SK-N-SH (cell line): ENCODE measurements at regions of chr2 and their contacts with region 1.

Region 1: DNA sequence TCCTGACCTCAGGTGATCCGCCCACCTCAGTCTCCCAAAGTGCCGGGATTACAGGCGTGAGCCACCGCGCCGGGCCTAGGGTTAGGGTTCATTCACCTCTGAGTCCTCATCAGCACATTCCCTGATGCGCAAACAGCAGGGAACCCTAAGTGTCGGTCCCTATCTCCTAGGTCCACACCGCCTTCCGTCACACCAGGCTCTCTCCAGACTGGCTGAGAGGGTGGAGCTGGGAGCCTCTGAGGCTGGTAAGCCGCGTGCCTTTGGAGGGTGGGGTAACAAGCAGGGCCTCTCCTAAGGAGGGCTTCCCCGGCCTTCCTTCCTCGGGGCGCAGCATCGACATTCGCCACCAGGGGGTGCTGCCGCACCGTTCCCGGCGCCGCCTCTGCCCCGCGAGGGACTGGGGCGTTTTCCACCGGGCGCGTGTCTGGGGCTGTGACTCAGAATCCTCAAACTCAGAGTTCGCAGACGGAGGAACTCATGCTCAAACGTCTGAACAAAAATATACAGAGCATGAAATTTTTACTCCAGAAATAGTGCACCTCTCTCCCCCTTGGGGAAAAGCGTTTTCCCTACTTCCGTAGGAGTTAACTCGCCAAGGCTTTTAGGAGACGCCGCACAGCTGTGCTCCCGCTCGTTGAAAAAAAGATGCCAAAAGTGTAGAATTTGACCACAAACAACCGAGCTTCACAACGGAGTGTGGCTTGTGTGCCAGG is 63.9 kb upstream of the ASAP2 start:
- DNase-seq: peak; percentile 94
- H3K4me3 ChIP-seq: peak overlapping the region; percentile 23 to 36; a peak in 2 of 4 replicates
- H3K27ac ChIP-seq: peak overlapping the region; percentile 16 to 58; a peak in 3 of 4 replicates
- H3K4me1 ChIP-seq: peaks cover 3 to 8% of the 10 kb centered on the region in 2 experiments; a peak in 2 of 4 replicates
- H3K27me3 ChIP-seq: no peaks in the 10 kb centered on the region
- CTCF ChIP-seq: peak; percentile 99
- EP300 ChIP-seq: peak in 1 of 2 experiments; percentile 44; a peak in 1 of 4 replicates
- RAD21 ChIP-seq: peak; percentile 99

Region 2: GRCh38 chr2:8867363-8867762 is 275.3 kb before region 1 on chr2:
- CTCF ChIA-PET with region 1: interaction called, 99 read pairs
- POLR2A ChIA-PET with region 1: no interaction called
- DNase-seq: peak; percentile 33
- H3K4me3 ChIP-seq: no peak overlapping the region
- H3K27ac ChIP-seq: no peak overlapping the region
- H3K4me1 ChIP-seq: no peaks in the 10 kb centered on the region; a peak in 1 of 4 replicates
- H3K27me3 ChIP-seq: no peaks in the 10 kb centered on the region
- CTCF ChIP-seq: no peak
- EP300 ChIP-seq: peak in 1 of 2 experiments; percentile 28; a peak in 1 of 4 replicates
- RAD21 ChIP-seq: no peak

Region 3: GRCh38 chr2:8907764-8908288 is 234.9 kb before region 1 on chr2:
- CTCF ChIA-PET with region 1: interaction called, 10 read pairs
- POLR2A ChIA-PET with region 1: no interaction called
- DNase-seq: peak; percentile 39
- H3K4me3 ChIP-seq: no peak overlapping the region
- H3K27ac ChIP-seq: peak overlapping the region in 1 of 2 experiments; percentile 77; a peak in 2 of 4 replicates
- H3K4me1 ChIP-seq: peaks cover 0 to 3% of the 10 kb centered on the region in 2 experiments; a peak in 1 of 4 replicates
- H3K27me3 ChIP-seq: no peaks in the 10 kb centered on the region
- CTCF ChIP-seq: no peak
- EP300 ChIP-seq: peak in 1 of 2 experiments; percentile 64; a peak in 1 of 4 replicates
- RAD21 ChIP-seq: no peak

Region 4: DNA sequence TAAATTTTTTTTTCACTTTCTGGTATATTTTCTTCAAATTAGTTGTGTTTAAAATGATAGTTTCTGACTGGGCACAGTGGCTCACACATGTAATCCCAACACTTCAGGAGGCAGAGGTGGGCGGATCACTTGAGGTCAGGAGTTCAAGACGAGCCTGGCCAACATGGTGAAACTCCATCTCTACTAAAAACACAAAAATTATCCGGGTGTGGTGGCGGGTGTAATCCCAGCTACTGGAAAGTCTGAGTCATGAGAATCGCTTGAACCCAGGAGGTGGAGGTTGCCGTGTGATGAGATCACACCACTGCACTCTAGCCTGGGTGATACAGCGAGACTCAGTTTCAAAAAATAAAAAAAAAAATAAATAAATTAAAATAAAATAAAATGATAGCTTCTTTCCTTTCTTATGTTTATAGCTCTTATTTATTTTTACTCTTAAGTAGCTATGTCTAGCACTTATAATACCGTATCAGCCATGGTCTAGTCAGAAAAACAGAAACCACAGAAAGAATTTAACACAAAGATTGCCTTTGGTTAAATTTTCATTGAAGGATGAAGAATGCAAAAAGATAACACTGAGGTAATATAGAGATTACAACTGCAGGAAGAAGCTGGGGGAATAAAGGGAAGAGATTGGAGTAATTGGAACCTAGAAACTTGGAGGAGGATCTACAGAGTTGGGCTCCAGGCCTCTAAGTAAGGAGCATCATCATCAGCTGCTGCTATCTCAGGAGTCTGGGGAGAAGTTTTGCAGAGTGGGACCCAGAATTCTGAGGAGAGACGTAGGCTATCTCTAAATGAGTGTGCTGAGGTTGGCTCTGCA is 84.6 kb before region 1 on chr2:
- CTCF ChIA-PET with region 1: no interaction called
- POLR2A ChIA-PET with region 1: no interaction called
- DNase-seq: no peak
- H3K4me3 ChIP-seq: no peak overlapping the region
- H3K27ac ChIP-seq: no peak overlapping the region
- H3K4me1 ChIP-seq: peaks cover 3 to 6% of the 10 kb centered on the region in 2 experiments; a peak in 2 of 4 replicates
- H3K27me3 ChIP-seq: no peaks in the 10 kb centered on the region
- CTCF ChIP-seq: no peak
- EP300 ChIP-seq: no peak
- RAD21 ChIP-seq: no peak

Region 5: GRCh38 chr2:9205963-9206948 is 63.5 kb after region 1 on chr2 and contains the start of gene ASAP2:
- CTCF ChIA-PET with region 1: interaction called, 56 read pairs
- POLR2A ChIA-PET with region 1: no interaction called
- DNase-seq: peak; percentile 99
- H3K4me3 ChIP-seq: peak within 1 kb of the TSS; percentile 90 to 98
- H3K27ac ChIP-seq: peak within 1 kb of the TSS; percentile 84 to 93
- H3K4me1 ChIP-seq: peaks cover 8 to 24% of the 10 kb centered on the region in 2 experiments
- H3K27me3 ChIP-seq: no peaks in the 10 kb centered on the region
- CTCF ChIP-seq: peak; percentile 90
- EP300 ChIP-seq: no peak
- RAD21 ChIP-seq: peak; percentile 72
- polyA plus RNA-seq, gene ASAP2: 37.9 and 41.4 TPM in 2 replicates

Region 6: GRCh38 chr2:9347411-9347881 is 204.7 kb after region 1 on chr2:
- CTCF ChIA-PET with region 1: interaction called, 18 read pairs
- POLR2A ChIA-PET with region 1: no interaction called
- DNase-seq: no peak
- H3K4me3 ChIP-seq: no peak overlapping the region
- H3K27ac ChIP-seq: no peak overlapping the region
- H3K4me1 ChIP-seq: no peaks in the 10 kb centered on the region; a peak in 1 of 4 replicates
- H3K27me3 ChIP-seq: no peaks in the 10 kb centered on the region
- CTCF ChIP-seq: no peak
- EP300 ChIP-seq: no peak
- RAD21 ChIP-seq: no peak

Region 7: GRCh38 chr2:9373077-9373875 is 230.6 kb after region 1 on chr2:
- CTCF ChIA-PET with region 1: interaction called, 51 read pairs
- POLR2A ChIA-PET with region 1: no interaction called
- DNase-seq: no peak
- H3K4me3 ChIP-seq: no peak overlapping the region
- H3K27ac ChIP-seq: no peak overlapping the region; a peak in 1 of 4 replicates
- H3K4me1 ChIP-seq: peaks cover 0 to 25% of the 10 kb centered on the region in 2 experiments; a peak in 3 of 4 replicates
- H3K27me3 ChIP-seq: no peaks in the 10 kb centered on the region
- CTCF ChIP-seq: no peak
- EP300 ChIP-seq: no peak
- RAD21 ChIP-seq: no peak